Right ventricle myocardium inferior (tissue), 1 donor: ENCODE measurements at regions of chr1 and their contacts with region 1.

Region 1: DNA sequence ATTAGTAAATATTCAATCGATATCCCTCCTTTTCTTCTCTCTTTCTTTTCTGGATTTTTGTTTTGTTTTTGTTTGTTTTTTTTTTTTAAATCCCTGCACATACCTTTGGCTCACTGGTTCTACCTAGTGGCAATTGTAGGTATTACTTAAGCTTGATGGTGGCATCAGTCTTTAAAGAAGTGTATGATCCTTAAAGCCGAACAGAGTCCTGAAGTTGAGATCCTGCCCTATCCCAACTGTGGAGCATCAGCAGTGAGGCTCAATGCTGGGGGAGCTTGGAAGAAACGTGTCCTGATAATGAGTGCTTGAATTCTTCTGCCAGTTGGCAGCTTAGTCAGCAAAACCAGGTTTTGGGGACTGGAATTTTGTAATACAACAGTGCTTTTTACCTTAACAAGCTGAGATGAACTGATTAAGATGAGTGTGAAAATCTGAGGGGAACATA is 60.8 kb downstream of the FASLG start:
- DNase-seq: no peak
- ATAC-seq: no peak

Region 2: DNA sequence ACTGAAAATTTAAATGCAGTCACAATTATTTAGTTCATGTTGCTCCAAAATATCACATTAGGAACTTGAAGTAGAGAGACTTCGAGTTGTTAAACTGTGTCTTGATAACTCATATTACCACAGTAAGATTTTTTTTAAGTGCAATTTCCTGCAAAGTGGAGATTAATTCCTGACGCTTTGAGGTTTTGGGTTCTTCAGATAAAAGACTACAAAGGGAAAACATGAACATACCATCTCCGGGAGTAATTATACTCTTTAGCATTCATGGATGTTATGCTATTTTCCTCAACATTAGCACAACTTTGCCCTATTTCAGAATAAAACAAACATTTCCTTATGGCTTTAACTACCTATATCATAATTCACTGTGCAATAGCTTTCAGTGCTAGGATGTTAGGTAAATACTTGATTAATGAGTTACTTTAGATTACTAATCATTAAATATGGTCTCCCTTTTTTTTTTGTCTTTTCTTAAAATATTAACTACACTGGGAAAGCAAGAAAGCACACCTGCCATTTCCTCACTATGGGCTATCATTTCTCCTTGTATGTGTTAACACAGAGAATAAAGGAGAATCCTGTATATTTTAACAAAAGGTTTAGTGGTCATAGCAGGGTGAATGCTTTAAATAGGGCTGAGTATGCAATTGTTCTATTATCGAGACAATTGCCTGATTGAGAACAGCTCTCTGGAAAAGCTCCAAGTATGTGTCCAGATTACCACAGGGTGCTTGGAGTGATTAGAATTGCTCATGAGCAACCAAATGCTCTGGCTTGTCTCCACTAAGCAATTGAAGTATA is 551.7 kb before region 1 on chr1:
- intact Hi-C with region 1: loop called (anchors 5 kb)
- DNase-seq: no peak
- ATAC-seq: peak; percentile 71

Region 3: GRCh38 chr1:172449585-172450534 is 269.9 kb before region 1 on chr1:
- intact Hi-C with region 1: loop called (anchors 5 kb)
- DNase-seq: peak; percentile 78
- ATAC-seq: peak; percentile 83

Region 4: DNA sequence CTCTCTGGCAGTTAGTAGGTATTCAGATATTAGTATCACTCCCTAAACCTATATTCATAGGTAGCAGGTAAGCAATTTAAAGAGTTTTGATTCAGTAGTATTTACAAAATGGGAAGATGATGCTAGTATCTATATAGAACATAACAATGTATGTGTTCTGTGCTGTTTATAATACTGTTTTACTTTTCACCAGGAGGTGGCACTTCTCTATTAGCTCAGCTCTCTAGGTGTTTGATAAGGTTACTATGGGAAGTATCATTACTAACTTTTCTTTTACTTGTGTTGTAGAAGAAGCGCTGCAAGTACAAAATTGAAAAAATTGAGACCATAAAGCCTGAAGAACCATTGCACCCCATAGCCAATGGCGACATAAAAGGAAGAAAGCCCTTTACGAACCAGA is 110.2 kb before region 1 on chr1:
- intact Hi-C with region 1: loop called (anchors 1 kb)
- DNase-seq: no peak
- ATAC-seq: no peak